Panc1 (cell line): ENCODE measurements at regions of chr15 and their contacts with region 1.

Region 1: DNA sequence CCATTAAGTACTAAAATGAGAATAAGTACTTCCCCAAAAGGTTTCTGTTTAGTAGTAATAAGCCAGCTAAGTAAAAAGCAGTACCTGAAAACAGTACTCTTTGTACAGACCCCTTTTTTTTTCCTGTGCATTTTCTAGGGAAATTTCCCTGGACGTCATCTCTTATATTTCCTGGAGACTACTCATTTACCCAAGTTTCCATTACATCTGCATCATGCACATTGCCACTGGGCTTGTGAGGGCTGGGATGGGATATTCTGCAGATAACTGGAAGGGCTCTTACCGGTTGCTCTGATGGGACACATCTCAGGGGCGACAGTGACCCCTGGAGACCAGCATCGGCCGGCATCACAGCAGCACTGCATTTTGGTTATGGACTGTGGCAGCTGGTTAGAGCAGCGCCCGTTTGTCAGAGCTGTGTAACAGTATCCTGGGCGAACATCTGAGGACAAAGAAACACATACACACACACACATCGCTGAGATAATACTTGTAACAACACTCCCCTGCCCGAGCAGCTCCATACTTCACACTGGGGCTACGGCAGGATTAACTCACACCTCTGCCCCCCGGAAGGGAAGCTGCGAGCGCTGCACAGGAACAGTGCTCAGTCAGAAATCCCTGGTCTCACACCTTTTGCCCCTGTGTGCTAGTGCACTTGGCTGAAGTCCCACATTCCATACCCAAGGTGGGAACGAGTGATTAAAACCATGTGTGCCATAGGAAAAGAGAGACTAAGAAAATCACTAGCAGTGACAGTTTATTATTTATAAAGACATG is 124.9 kb downstream of the FBN1 start:
- DNase-seq: no peak
- ATAC-seq: peak; percentile 76
- H3K4me3 ChIP-seq: no peak overlapping the region
- H3K27ac ChIP-seq: no peak overlapping the region
- H3K4me1 ChIP-seq: no peaks in the 10 kb centered on the region
- H3K27me3 ChIP-seq: peaks cover 4% of the 10 kb centered on the region
- CTCF ChIP-seq: peak; percentile 38

Region 2: GRCh38 chr15:47514211-47514652 is 1006.3 kb before region 1 on chr15:
- CTCF ChIA-PET with region 1: no interaction called
- POLR2A ChIA-PET with region 1: no interaction called
- in situ Hi-C with region 1: no loop called
- intact Hi-C with region 1: no loop called
- DNase-seq: no peak
- ATAC-seq: no peak
- H3K4me3 ChIP-seq: no peak overlapping the region
- H3K27ac ChIP-seq: no peak overlapping the region
- H3K4me1 ChIP-seq: no peaks in the 10 kb centered on the region
- H3K27me3 ChIP-seq: no peaks in the 10 kb centered on the region
- CTCF ChIP-seq: no peak

Region 3: GRCh38 chr15:48358229-48358641 is 162.3 kb before region 1 on chr15:
- CTCF ChIA-PET with region 1: no interaction called
- POLR2A ChIA-PET with region 1: no interaction called
- in situ Hi-C with region 1: no loop called
- intact Hi-C with region 1: loop called (anchors 5 kb)
- DNase-seq: no peak
- ATAC-seq: peak; percentile 63; the same call in 1 of the 2 replicates
- H3K4me3 ChIP-seq: no peak overlapping the region
- H3K27ac ChIP-seq: no peak overlapping the region
- H3K4me1 ChIP-seq: no peaks in the 10 kb centered on the region
- H3K27me3 ChIP-seq: no peaks in the 10 kb centered on the region
- CTCF ChIP-seq: peak; percentile 58; the same call in 1 of the 2 replicates

Region 4: GRCh38 chr15:48385031-48385830 is 135.3 kb before region 1 on chr15:
- CTCF ChIA-PET with region 1: no interaction called
- POLR2A ChIA-PET with region 1: no interaction called
- in situ Hi-C with region 1: no loop called
- intact Hi-C with region 1: no loop called
- DNase-seq: no peak
- ATAC-seq: no peak
- H3K4me3 ChIP-seq: no peak overlapping the region
- H3K27ac ChIP-seq: no peak overlapping the region
- H3K4me1 ChIP-seq: no peaks in the 10 kb centered on the region
- H3K27me3 ChIP-seq: no peaks in the 10 kb centered on the region; the same call in 1 of the 2 replicates
- CTCF ChIP-seq: no peak